ENCODE measurements at regions of chr1 and their contacts with region 1.

Region 1: GRCh38 chr1:167109125-167109524 is 15.2 kb downstream of the STYXL2 start:
- DNase-seq: no peak
- ATAC-seq: peak; percentile 53
- H3K4me3 Mint-ChIP-seq: no peak overlapping the region
- H3K27ac Mint-ChIP-seq: peak overlapping the region; percentile 62
- H3K4me1 Mint-ChIP-seq: peaks cover 48% of the 10 kb centered on the region
- H3K27me3 Mint-ChIP-seq: peaks cover 20% of the 10 kb centered on the region

Region 2: DNA sequence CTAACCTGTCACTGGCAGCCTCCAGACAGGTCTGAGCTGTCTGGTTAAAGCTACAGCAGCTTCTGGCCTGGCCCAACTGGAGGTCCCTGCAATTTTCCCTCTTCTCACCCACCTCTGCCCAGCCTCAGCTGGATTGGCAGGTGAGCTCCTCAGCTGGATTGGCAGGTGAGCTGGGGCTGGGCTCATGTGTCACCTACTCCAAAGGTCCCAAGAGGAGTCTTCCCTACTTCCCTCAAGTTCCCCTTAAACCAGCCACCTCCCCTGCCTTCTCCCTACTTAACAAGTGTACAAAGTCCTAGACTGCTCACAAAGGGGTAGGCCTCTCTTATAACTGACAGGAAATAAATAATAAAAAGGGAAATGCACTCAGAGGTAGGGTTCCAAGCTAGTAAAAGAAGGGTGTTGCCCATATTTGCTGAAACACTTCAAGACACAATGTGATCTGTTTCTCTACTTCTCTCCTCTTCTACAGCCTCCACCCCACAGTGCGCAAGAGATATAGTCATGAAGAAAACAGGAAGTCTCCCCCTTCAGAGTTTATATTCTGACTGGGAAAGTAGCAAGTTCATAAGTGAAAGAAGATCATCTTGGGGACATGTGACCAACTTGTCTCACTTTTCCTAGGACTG is 18.7 kb before region 1 on chr1 and contains the start of gene GPA33:
- CTCF ChIA-PET with region 1: interaction called, 18 read pairs
- POLR2A ChIA-PET with region 1: no interaction called
- DNase-seq: no peak
- ATAC-seq: peak; percentile 76
- H3K4me3 Mint-ChIP-seq: no peak within 1 kb of the TSS
- H3K27ac Mint-ChIP-seq: peak within 1 kb of the TSS; percentile 85
- H3K4me1 Mint-ChIP-seq: peaks cover 14% of the 10 kb centered on the region
- H3K27me3 Mint-ChIP-seq: no peaks in the 10 kb centered on the region
- total RNA-seq, gene GPA33: 0.16 to 0.24 TPM

Measured in activated CD8-positive, alpha-beta T cell treated with anti-CD3 and anti-CD28 coated beads, Interleukin-2, amount 10 ng/mL, durations not matched to agents 7 days and 5 days (primary cell).